ENCODE measurements at regions of chr7 and their contacts with region 1.

Region 1: DNA sequence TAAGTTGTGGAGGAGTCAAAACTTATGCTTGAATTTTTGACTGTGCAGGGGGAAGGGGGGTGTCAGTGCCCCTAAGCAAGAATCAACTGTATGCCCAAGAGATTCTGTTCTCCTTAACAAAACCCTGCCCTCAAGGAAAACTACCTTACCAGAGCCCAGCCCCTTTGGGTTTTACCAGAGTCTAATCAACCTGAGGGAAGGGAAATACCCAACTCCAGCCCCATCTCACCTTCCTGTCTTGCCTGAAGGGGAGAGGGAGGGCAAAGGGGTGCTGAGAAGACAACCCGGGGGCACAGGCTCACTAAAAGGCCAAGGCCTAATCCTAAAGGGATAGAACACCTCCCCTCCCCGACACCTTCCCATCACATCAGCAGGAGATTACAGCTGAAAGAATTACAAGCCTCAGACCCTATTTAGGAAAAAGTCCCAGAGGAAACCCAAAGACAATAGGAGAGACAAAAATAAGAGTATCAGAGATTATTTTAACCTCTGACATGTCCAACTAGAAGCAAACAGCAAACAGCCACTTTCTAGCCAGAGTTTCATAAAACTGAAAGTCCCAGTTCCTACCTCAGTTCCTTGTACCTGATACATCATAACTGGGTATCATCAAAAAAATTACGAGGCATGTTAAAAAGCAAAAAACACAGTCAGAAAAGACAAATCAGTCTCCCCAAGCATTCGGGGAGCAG is 26.8 kb upstream of the C7orf33 start:
- DNase-seq: no peak
- ATAC-seq: peak; percentile 57
- H3K4me3 Mint-ChIP-seq: peak overlapping the region; percentile 40
- H3K27ac Mint-ChIP-seq: peak overlapping the region; percentile 81
- H3K4me1 Mint-ChIP-seq: peaks cover 17% of the 10 kb centered on the region
- H3K27me3 Mint-ChIP-seq: peaks cover 8% of the 10 kb centered on the region

Region 2: GRCh38 chr7:148153616-148154284 is 410.0 kb before region 1 on chr7:
- CTCF ChIA-PET with region 1: no interaction called
- POLR2A ChIA-PET with region 1: no interaction called
- intact Hi-C with region 1: no loop called
- DNase-seq: no peak
- ATAC-seq: no peak
- H3K4me3 Mint-ChIP-seq: no peak overlapping the region
- H3K27ac Mint-ChIP-seq: no peak overlapping the region
- H3K4me1 Mint-ChIP-seq: no peaks in the 10 kb centered on the region
- H3K27me3 Mint-ChIP-seq: peaks cover 4% of the 10 kb centered on the region

Region 3: GRCh38 chr7:148535217-148535616 is 28.5 kb before region 1 on chr7:
- CTCF ChIA-PET with region 1: interaction called, 4 read pairs
- POLR2A ChIA-PET with region 1: no interaction called
- intact Hi-C with region 1: loop called (anchors 1 to 2 kb)
- DNase-seq: peak; percentile 68
- ATAC-seq: peak; percentile 90
- H3K4me3 Mint-ChIP-seq: peak overlapping the region; percentile 57
- H3K27ac Mint-ChIP-seq: peak overlapping the region; percentile 73
- H3K4me1 Mint-ChIP-seq: peaks cover 11% of the 10 kb centered on the region
- H3K27me3 Mint-ChIP-seq: peaks cover 21% of the 10 kb centered on the region

Region 4: DNA sequence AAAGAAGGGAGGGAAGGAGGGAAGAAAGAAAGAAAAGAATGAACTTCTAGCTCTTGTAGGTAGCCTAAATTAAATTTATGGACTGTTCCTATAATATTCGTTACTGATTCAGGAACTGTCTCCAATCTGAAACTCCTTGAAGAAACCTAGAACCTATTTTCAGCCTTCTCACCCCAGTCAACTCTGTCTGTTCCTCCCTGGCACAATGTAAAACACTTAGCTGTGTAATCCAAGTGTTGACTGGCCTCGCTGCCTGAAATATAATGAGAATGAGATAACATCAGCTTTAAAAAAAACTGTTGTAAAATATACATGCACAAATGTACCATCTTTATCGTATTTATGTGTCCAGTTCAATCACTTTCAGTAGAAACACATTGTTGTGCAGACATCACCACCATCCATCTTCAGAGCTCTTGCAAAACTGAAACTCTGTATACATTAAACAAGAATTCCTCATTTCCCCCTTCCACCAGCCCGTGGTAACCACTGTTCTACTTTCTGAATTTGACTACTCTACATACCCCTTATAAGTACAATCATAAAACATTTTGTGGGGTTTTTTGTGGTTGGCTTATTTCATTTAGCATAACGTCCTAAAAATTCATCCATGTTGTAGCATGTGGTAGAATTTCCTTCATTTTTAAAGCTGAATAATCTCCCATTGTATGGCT is 20.6 kb after region 1 on chr7:
- CTCF ChIA-PET with region 1: interaction called, 3 read pairs
- POLR2A ChIA-PET with region 1: interaction called, 4 read pairs
- intact Hi-C with region 1: loop called in 1 of 2 experiments (anchors 1 kb)
- DNase-seq: peak; percentile 43
- ATAC-seq: peak; percentile 93
- H3K4me3 Mint-ChIP-seq: no peak overlapping the region
- H3K27ac Mint-ChIP-seq: no peak overlapping the region
- H3K4me1 Mint-ChIP-seq: peaks cover 27% of the 10 kb centered on the region
- H3K27me3 Mint-ChIP-seq: peaks cover 4% of the 10 kb centered on the region

Region 5: DNA sequence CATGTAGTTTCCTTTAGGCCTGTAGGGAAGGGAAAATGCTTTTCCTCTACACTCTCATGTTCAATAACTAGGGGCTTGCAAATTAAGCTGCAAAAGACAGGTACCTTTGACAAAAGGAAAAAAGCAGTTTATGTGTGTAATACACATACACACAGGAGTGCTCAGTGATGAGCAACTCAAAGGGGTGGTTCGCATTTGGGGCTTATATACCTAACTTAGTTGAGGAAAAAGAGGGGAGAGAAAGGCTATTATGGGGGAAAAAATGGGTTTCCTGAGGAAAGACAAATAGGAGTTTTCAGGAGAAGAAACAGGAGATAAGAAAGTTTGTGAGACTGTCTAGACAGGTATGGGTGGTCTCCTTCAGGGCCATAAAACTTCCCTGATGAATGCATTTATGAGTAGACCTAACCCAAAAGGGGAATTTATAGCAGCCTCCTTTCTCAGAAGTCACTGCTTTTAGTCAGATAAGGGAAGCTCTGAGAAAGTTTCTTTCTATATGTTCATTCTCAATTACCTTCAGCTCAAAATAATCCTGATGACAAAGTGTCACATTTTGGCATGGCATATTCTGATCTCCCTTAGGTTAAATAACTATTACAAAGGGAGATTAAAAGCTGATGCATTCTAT is 375.5 kb after region 1 on chr7:
- CTCF ChIA-PET with region 1: no interaction called
- POLR2A ChIA-PET with region 1: no interaction called
- intact Hi-C with region 1: no loop called
- DNase-seq: peak; percentile 19
- ATAC-seq: peak; percentile 66
- H3K4me3 Mint-ChIP-seq: peak overlapping the region; percentile 98
- H3K27ac Mint-ChIP-seq: peak overlapping the region; percentile 82
- H3K4me1 Mint-ChIP-seq: peaks cover 16% of the 10 kb centered on the region
- H3K27me3 Mint-ChIP-seq: no peaks in the 10 kb centered on the region

Measured in activated CD4-positive, alpha-beta T cell treated with anti-CD3 and anti-CD28 coated beads for 36 hours (primary cell).